ENCODE measurements at regions of chr9 and their contacts with region 1.

Region 1: GRCh38 chr9:136488247-136489214 is 5.7 kb upstream of the SEC16A start:
- DNase-seq: peak; percentile 25
- H3K4me3 ChIP-seq: no peak overlapping the region
- H3K27ac ChIP-seq: no peak overlapping the region
- H3K4me1 ChIP-seq: peaks cover 9% of the 10 kb centered on the region
- H3K27me3 ChIP-seq: no peaks in the 10 kb centered on the region
- CTCF ChIP-seq: peak; percentile 97

Region 2: DNA sequence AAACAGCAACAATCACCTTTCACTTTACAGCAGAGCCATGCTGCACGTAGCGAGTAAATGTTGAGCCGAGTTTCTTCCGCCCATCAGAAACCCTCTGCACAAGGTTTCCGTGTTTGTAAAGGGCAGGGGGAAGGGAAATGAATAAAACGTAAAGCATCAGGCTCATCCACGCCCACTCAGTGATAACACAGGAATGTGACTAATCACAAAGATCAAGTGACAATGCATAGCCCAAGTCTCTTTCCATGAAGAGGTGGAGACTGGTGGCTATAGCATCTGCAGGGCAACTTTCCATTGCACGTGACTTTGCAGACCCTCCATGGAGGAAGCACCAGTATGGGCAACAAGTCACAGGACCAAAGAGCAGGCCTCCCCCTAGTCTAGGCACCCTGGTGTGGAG is 637.8 kb before region 1 on chr9:
- CTCF ChIA-PET with region 1: no interaction called
- POLR2A ChIA-PET with region 1: no interaction called
- intact Hi-C with region 1: no loop called
- DNase-seq: peak; percentile 35
- H3K4me3 ChIP-seq: no peak overlapping the region
- H3K27ac ChIP-seq: no peak overlapping the region
- H3K4me1 ChIP-seq: peaks cover 6% of the 10 kb centered on the region
- H3K27me3 ChIP-seq: no peaks in the 10 kb centered on the region
- CTCF ChIP-seq: no peak

Region 3: GRCh38 chr9:136527721-136528691 is 39.5 kb after region 1 on chr9:
- CTCF ChIA-PET with region 1: interaction called, 10 read pairs
- POLR2A ChIA-PET with region 1: no interaction called
- intact Hi-C with region 1: no loop called
- DNase-seq: peak; percentile 49
- H3K4me3 ChIP-seq: no peak overlapping the region
- H3K27ac ChIP-seq: no peak overlapping the region
- H3K4me1 ChIP-seq: peaks cover 14% of the 10 kb centered on the region
- H3K27me3 ChIP-seq: no peaks in the 10 kb centered on the region
- CTCF ChIP-seq: no peak

Region 4: GRCh38 chr9:136618580-136619547 is 130.3 kb after region 1 on chr9:
- CTCF ChIA-PET with region 1: no interaction called
- POLR2A ChIA-PET with region 1: no interaction called
- intact Hi-C with region 1: no loop called
- DNase-seq: no peak
- H3K4me3 ChIP-seq: no peak overlapping the region
- H3K27ac ChIP-seq: no peak overlapping the region
- H3K4me1 ChIP-seq: peaks cover 3% of the 10 kb centered on the region
- H3K27me3 ChIP-seq: no peaks in the 10 kb centered on the region
- CTCF ChIP-seq: no peak

Measured in A673 (cell line).